Heart left ventricle (tissue), 16 donors: ENCODE measurements at regions of chr16 and their contacts with region 1.

Region 1: DNA sequence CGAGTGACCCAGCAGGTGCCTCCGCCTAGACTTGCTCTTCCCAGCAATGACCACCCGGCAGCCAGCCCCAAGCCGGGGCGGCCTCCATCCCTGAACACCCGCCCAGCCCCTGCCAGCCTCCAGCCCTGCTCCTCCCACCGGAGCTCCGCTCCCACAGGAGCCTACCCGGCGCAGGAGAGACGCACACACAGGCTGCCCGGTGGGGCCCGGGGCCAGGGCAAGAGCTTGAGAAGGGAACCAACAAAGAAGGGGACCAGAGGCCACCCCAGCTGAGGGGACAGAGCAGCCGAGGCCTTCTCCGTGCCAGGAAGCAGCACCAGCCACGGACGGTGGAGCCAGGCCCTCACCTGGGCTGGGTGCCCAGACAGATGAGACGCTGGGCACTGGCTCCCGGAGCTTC is 13.8 kb downstream of the PKD1 start:
- DNase-seq: peak in 4 of 5 donors; percentile 52 to 75 (median 65)
- ATAC-seq: peak; percentile 4 to 23 (median 22)
- H3K4me3 ChIP-seq: peak overlapping the region in 5 of 12 donors; percentile 6 to 39 (median 35)
- H3K27ac ChIP-seq: peak overlapping the region in 11 of 12 donors; percentile 59 to 100 (median 98)
- H3K4me1 ChIP-seq: peaks cover 8 to 75% (median 57%) of the 10 kb centered on the region in 12 donors
- H3K27me3 ChIP-seq: no peaks in the 10 kb centered on the region
- CTCF ChIP-seq: no peak
- POLR2A ChIP-seq: no peak

Region 2: DNA sequence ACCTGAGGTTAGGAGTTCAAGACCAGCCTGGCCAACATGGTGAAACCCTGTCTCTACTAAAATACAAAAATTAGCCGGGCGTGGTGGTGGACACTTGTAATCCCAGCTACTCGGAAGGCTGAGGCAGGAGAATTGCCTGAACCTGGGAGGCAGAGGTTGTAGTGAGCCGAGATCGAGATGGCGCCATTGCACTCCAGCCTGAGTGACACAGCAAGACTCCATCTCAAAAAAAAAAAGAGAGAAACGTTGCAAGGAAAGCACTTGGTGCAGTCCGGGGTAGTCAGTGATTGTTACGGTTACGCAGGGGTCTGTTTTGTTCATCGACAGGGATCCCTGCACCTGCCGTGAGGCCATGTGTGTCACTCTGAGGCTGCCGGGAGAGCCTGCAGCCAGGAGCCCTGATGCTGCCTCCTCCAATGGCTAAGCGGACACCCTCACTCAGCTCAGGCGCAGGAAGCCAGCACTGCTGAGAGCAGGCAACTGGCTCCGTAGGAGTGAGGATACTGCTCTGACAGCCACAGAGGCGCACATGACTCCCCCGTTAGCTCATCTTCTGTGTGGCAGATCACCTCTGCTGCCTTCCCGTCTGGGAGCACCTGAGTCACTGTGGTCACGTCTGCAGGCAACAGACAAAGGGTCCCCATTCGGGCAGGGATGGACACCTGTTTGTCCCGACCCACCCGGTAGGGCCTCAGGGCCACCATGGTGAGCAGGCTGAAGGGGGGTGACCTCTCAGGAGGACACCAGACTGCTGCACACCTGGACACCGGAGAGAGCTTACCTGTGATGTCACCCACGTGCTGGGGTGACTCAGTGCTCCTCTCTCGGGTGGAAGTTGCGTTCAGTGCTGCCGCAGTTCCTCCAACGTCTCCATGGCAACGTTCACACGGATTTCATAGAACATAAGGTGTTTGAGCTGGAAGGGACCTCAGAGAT is 21.4 kb after region 1 on chr16:
- intact Hi-C with region 1: loop called in 1 of 10 experiments (anchors 2 kb)
- DNase-seq: no peak
- ATAC-seq: no peak
- H3K4me3 ChIP-seq: no peak overlapping the region
- H3K27ac ChIP-seq: no peak overlapping the region
- H3K4me1 ChIP-seq: peaks cover 0 to 18% (median 11%) of the 10 kb centered on the region in 12 donors
- H3K27me3 ChIP-seq: no peaks in the 10 kb centered on the region
- CTCF ChIP-seq: no peak
- POLR2A ChIP-seq: no peak